Activated CD4-positive, alpha-beta T cell treated with anti-CD3 and anti-CD28 coated beads for 36 hours (primary cell): ENCODE measurements at regions of chr7 and their contacts with region 1.

Region 1: DNA sequence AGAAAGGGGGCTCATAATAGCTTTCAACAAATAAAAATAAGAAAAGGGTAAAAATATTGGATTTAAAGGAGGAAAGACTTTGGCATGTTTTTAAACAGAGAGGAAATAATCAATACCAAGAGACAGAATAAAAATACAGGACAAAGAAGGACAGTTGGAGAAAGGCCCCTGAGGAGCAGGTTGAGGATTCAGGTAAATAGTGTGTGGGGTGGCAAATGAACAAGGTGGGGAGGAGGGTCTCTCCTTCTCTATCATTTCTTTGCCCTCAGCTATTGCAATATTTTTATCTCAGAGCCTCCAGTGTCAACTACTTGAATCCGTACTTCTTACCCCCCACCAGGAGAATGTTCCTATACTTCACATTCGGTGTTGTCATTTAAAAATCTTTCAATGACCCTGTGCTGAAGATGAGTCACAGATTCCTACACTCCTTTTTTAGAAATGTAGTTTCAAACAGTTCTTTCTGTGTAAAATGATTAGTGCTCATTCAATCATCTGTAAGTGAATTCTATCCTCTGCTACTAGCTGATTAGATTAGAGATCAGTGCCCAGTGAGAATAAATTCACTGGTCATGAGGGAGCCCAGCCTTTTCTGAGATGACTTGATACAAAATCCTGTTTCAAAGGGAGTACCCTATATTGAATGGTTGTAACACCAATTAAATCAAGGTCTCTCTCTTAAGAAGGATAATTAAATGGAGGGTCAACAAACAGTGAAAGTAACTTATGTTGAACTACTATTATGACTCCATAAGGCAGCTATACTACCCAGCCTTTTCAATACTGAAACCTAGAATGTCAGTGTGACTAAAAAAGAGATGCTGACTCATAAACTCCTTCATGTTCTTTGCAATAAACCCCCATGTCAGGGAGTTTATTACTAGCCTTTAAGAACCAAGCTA is 50.4 kb upstream of the WNT16 start:
- DNase-seq: no peak
- ATAC-seq: peak; percentile 92
- H3K4me3 Mint-ChIP-seq: no peak overlapping the region
- H3K27ac Mint-ChIP-seq: no peak overlapping the region
- H3K4me1 Mint-ChIP-seq: peaks cover 20% of the 10 kb centered on the region
- H3K27me3 Mint-ChIP-seq: peaks cover 33% of the 10 kb centered on the region

Region 2: GRCh38 chr7:120950539-120951308 is 327.6 kb before region 1 on chr7 and contains the start of gene ING3:
- CTCF ChIA-PET with region 1: no interaction called
- POLR2A ChIA-PET with region 1: interaction called, 4 read pairs
- intact Hi-C with region 1: loop called in 1 of 2 experiments (anchors 5 kb)
- DNase-seq: peak; percentile 97
- ATAC-seq: peak; percentile 94
- H3K4me3 Mint-ChIP-seq: peak within 1 kb of the TSS; percentile 97
- H3K27ac Mint-ChIP-seq: peak within 1 kb of the TSS; percentile 97
- H3K4me1 Mint-ChIP-seq: peaks cover 22% of the 10 kb centered on the region
- H3K27me3 Mint-ChIP-seq: peaks cover 5% of the 10 kb centered on the region
- total RNA-seq, gene ING3: 23.4 to 26.5 TPM

Region 3: GRCh38 chr7:121138262-121138933 is 140.0 kb before region 1 on chr7:
- CTCF ChIA-PET with region 1: no interaction called
- POLR2A ChIA-PET with region 1: no interaction called
- intact Hi-C with region 1: loop called (anchors 2 kb)
- DNase-seq: peak; percentile 28
- ATAC-seq: peak; percentile 93
- H3K4me3 Mint-ChIP-seq: peak overlapping the region; percentile 26
- H3K27ac Mint-ChIP-seq: no peak overlapping the region
- H3K4me1 Mint-ChIP-seq: peaks cover 16% of the 10 kb centered on the region
- H3K27me3 Mint-ChIP-seq: peaks cover 8% of the 10 kb centered on the region

Region 4: GRCh38 chr7:121307021-121307574 is 28.7 kb after region 1 on chr7:
- CTCF ChIA-PET with region 1: no interaction called
- POLR2A ChIA-PET with region 1: no interaction called
- intact Hi-C with region 1: loop called in 1 of 2 experiments (anchors 2 kb)
- DNase-seq: no peak
- ATAC-seq: no peak
- H3K4me3 Mint-ChIP-seq: no peak overlapping the region
- H3K27ac Mint-ChIP-seq: no peak overlapping the region
- H3K4me1 Mint-ChIP-seq: peaks cover 10% of the 10 kb centered on the region
- H3K27me3 Mint-ChIP-seq: peaks cover 19% of the 10 kb centered on the region

Region 5: DNA sequence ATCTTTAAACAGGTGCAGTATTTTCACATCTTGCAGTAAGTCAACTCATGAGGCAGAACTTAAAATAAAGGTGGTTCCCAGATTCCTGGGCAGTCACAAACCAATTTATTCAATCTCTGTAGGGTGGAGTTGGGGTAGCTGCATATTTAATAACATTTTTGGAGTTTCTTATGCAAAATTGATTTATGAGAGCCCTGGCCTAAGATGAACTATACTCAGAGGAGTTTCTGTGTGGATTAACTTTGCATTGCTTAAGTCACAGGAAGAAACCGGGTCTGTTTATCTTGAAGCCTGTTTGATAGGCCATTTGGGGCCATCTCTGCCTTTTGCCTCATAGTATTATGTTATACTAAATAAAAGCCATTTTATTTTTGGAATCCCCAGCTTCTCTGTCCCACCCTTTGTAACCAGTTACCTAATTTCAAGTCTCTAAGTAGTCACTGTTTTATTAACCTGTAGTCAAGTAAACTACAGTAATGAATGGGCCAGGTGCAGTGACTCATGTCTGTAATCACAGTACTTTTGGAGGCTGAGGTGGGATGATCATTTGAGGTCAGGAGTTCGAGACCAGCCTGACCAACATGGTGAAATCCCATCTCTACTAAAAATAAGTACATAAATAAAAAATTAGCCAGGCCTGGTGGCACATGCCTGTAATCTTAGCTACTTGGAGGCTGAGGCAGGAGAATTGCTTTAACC is 222.1 kb after region 1 on chr7:
- CTCF ChIA-PET with region 1: no interaction called
- POLR2A ChIA-PET with region 1: no interaction called
- intact Hi-C with region 1: loop called in 1 of 2 experiments (anchors 1 kb)
- DNase-seq: peak; percentile 13
- ATAC-seq: peak; percentile 11
- H3K4me3 Mint-ChIP-seq: no peak overlapping the region
- H3K27ac Mint-ChIP-seq: no peak overlapping the region
- H3K4me1 Mint-ChIP-seq: peaks cover 16% of the 10 kb centered on the region
- H3K27me3 Mint-ChIP-seq: peaks cover 7% of the 10 kb centered on the region

Region 6: DNA sequence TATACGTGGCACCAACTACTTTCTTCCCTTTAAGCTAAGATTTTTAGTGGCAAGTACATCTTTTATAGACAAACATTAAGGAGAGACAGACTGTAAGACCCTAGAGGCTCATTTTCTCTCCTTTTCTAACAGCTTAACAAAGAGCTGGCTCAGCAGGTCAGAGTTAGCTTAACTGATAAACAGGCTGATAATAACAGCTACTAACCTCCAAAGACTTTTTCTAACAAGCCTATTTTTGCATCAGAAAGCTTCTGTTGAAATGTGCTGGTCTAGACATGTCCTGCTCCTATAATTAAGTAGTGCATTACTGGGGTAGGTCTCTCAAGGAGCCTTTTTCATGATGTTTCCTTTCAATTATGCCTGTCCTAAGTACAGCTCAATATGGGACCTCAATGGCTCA is 356.0 kb after region 1 on chr7:
- CTCF ChIA-PET with region 1: no interaction called
- POLR2A ChIA-PET with region 1: no interaction called
- intact Hi-C with region 1: no loop called
- DNase-seq: no peak
- ATAC-seq: no peak
- H3K4me3 Mint-ChIP-seq: no peak overlapping the region
- H3K27ac Mint-ChIP-seq: no peak overlapping the region
- H3K4me1 Mint-ChIP-seq: no peaks in the 10 kb centered on the region
- H3K27me3 Mint-ChIP-seq: no peaks in the 10 kb centered on the region